Sigmoid colon (tissue), 7 donors: ENCODE measurements at regions of chr11 and their contacts with region 1.

Region 1: DNA sequence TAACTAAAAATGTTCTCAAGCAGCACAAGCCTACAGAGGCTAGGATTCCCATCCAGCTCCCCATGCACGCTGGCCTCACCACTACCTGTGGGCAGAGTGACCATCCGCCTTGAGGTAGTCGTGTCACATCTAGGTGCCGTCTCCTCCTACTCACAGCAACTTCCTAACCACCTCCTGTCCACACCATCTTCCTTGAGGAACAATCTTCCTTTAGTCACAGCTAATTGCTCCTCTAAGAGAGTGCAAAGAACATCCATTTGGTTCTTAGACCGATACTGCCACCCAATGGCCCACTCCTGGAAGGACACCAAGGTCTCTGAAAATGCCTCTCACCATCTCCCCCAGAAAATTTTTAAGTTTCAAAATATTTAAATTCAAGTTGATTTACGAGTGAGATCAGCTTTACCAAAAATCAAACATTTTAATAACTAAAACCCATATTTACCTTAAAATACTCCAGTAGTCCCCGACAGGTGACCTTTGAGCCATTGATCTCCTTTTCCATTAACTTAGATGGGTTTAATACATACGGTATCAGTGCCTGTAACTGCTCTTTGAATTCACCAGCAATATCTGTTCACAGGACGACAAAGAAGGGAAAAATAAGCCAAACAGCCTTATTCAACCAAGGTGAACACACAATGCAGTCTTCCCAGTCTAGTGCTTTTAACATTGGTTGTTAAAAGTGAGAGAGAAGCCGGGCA is 21.7 kb upstream of the PLAAT3 start:
- DNase-seq: peak; percentile 74
- H3K4me3 ChIP-seq: no peak overlapping the region
- H3K27ac ChIP-seq: no peak overlapping the region
- H3K4me1 ChIP-seq: no peaks in the 10 kb centered on the region
- H3K27me3 ChIP-seq: no peaks in the 10 kb centered on the region
- CTCF ChIP-seq: peak; percentile 62 to 82 (median 74)
- EP300 ChIP-seq: no peak
- POLR2A ChIP-seq: no peak

Region 2: GRCh38 chr11:63478896-63479295 is 157.0 kb before region 1 on chr11:
- intact Hi-C with region 1: loop called (anchors 1 kb)
- DNase-seq: peak; percentile 76
- H3K4me3 ChIP-seq: no peak overlapping the region
- H3K27ac ChIP-seq: peak overlapping the region; percentile 8 to 46 (median 41)
- H3K4me1 ChIP-seq: peaks cover 0 to 6% (median 0%) of the 10 kb centered on the region in 4 donors
- H3K27me3 ChIP-seq: no peaks in the 10 kb centered on the region
- CTCF ChIP-seq: peak; percentile 87 to 94 (median 90)
- EP300 ChIP-seq: no peak
- POLR2A ChIP-seq: no peak

Region 3: DNA sequence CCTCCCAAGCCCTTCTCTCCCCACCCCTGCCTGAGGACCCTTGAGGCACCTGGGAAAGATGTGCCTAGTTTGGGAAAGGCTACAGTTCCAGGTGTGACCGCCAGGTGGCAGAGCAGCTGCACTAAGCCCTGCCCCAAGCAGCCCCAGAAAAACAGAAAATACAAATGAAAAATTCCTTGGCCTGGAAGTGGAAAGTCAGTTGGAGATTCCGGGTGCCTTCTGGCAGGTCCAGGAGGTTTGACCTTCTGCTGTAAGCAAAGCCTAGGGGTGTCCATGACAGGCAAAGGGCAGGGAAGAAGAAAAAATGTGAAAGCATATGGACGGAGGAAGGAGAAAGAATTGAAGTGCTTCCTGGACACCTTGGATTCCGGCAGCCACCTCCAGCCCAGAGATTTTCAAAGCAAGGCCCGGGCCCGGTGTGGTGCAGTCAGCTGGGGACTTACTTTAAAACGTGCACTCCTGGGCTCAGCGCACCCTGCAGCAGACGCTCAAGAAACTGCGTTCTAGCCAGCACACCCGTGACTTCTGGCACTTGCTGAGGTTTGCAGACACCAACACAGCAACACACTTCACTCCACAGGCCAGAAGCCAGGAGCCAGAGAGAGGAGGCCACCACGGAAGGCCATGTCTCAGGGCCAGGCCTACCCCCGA is 917.8 kb after region 1 on chr11:
- intact Hi-C with region 1: no loop called
- DNase-seq: peak; percentile 93
- H3K4me3 ChIP-seq: no peak overlapping the region
- H3K27ac ChIP-seq: peak overlapping the region; percentile 57 to 81 (median 68)
- H3K4me1 ChIP-seq: peaks cover 0 to 28% (median 20%) of the 10 kb centered on the region in 4 donors
- H3K27me3 ChIP-seq: no peaks in the 10 kb centered on the region
- CTCF ChIP-seq: peak; percentile 95 to 99 (median 98)
- EP300 ChIP-seq: no peak
- POLR2A ChIP-seq: no peak